BJ (cell line): ENCODE measurements at regions of chr12 and their contacts with region 1.

Region 1: DNA sequence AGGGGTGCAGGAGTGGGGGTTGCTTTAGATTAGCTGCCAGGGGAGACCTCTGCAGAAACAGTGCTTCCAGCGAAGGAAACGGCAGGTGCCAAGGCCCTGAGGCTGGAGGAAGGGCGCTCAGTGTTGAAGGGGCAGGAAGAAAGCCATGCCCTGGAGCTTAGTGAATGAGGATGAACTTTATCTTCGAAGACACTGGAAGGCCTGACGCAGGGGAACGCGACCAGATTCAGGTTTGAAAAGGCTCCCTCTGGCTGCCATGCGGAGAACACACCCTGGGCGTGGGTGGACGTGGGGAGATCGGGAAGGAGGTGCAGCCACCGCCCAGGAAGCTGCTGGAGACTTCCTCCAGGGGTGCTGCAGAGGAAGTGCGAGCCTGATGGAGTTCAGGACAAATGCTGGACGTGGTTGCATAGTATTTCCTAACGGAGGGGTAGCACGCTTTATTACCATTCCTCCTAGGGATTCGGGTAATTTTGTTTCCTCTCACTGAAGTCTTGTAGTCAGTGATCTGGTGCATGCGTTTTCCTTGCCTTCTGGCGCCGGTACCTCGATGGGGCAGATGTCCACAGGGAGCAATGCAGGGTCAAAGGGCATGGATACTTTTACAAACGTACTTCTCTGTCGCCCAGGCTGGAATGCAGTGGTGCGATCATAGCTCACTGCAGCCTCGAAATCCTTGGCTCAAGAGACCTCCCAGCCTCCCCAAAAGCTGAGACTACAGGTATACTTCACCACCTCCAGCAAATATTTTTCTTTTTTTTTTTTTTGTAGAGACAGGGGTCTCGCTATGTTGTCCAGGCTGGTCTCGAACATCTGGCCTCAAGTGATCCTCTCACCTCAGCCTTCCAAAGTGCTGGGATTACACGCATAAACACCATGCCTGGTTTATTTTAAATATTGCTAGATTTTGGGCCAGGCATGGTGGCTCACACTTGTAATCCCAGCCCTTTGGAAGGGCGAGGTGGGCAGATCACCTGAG is 26.4 kb upstream of the UBC start:
- DNase-seq: peak; percentile 63
- H3K4me3 ChIP-seq: peak overlapping the region; percentile 27
- H3K27me3 ChIP-seq: no peaks in the 10 kb centered on the region
- CTCF ChIP-seq: peak; percentile 96

Region 2: DNA sequence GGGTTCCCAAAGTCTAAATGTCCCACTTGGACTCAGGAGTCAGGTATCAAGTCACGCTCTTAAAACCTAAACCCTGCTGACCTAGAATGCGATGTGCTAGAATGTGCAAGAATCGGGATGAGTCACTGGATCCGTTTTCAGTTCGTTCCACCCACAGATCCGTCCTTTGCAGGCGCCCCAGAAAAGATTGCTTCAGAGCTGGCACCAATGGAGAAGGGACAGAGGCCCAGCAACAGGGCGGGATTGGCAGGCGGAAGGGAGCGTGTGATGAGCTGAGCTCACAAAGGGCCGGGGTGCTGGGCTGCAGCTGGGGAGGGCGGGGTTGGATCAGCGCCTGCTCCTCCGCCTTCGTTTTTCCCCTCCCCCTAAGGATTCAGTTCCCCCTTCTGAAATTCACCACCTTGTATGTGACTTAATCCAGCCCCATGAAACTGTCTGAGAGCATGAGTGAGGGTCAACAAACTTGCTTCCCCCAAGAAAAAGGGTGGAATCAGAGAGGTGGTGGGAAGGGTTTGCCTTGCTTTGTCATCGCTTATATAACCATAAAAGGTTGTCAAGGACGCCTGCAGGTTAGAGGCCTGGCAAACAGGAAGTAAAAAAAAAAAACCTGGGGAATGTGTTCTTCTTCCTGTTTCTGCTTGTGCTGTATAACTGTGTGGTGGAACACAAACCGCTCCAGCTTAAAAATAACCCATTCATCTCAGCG is 23.6 kb before region 1 on chr12:
- CTCF ChIA-PET with region 1: interaction called, 35 read pairs
- POLR2A ChIA-PET with region 1: interaction called, 5 read pairs
- DNase-seq: peak; percentile 99
- H3K4me3 ChIP-seq: peak overlapping the region; percentile 22; the same call in 1 of the 2 replicates
- H3K27me3 ChIP-seq: no peaks in the 10 kb centered on the region
- CTCF ChIP-seq: no peak

Region 3: DNA sequence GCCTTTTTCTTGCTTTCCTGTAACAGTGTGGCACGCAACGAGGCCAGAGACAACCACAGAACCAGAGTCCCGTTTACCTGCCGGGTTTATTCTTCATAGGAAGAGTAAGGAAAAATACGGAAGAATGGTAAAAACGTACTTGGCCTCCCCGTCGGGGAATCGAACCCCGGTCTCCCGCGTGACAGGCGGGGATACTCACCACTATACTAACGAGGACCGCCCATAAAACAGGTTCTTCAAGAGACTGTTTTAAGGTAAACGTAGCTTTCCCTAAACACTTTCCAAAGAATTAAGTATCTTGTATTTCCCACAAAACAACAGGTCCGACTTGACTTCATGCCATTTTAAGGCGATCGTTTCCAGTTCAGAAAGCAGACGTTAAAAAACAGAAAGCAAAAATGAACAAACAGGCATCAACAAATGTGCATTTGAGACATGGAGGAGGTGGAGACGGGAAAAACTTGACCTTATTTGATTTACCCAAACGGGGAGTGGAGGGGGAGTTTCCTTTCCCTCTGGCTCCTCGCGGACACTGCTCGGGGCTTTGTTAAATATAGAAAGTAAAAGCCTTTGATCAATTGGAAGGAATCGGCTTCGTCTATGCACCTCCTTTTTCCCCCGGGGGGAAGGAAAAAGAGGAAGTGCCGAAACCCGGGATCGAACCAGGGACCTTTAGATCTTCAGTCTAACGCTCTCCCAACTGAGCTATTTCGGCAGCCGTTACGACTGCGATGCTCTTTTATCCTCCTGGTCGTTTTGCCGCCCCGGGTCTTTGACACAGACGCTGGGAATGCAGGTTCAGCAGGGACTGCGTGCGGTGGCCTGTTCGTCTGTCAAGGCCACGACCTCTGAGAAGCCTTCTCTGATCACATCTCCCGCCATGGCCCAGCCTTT is 13.4 kb before region 1 on chr12:
- CTCF ChIA-PET with region 1: interaction called, 32 read pairs
- POLR2A ChIA-PET with region 1: no interaction called
- DNase-seq: no peak
- H3K4me3 ChIP-seq: peak overlapping the region; percentile 45
- H3K27me3 ChIP-seq: no peaks in the 10 kb centered on the region
- CTCF ChIP-seq: no peak

Region 4: GRCh38 chr12:124952801-124953200 is 12.0 kb after region 1 on chr12:
- CTCF ChIA-PET with region 1: interaction called, 17 read pairs
- POLR2A ChIA-PET with region 1: no interaction called
- DNase-seq: no peak
- H3K4me3 ChIP-seq: no peak overlapping the region
- H3K27me3 ChIP-seq: no peaks in the 10 kb centered on the region
- CTCF ChIP-seq: no peak